ENCODE measurements at regions of chr7 and their contacts with region 1.

Region 1: DNA sequence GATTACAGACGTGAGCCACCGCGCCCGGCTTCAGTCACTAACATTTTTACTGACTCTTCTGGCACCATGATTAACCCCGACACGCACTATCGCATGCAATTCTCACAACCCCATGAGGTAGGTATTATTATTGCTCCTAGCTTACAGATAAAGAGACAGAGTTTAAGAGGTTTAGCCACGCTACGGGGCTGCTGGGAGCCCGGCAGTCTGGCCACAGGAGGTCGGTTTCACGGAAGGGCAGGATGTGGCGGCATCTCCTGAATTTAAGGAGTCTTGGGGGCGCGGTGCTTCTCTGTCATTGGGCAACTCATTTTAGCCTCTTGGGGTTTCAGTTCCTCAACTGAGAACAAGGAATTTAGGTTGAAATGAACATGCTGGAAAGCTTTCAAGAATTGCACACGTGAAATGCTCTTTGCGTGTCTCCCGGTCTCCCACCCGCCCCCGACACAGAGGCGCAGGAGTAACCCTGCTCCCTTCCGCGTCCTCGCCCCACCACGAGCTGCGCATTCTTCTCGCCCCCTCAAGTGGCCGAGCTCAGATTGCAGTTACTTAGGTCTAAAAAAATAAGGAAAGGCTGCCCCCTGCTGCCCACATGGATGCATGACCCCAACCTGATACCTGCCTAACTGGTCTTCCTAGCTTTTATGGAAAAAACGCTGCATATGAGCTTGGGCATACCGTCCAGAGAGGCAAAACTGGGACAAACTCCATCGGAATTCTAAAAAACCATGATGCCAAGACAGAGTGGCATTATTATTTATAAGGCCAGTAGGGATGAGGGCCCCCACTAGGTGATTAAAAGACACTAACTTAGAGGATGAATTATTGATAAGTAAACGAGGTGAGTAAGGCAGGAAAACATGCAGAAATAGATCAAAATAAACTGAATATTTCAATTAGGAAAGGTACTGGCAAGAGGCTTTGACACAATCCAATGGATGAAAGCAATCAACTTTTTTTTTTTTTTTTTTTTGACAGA is 12.4 kb downstream of the PRSS2 start:
- DNase-seq: peak; percentile 89

Region 2: GRCh38 chr7:142632291-142633134 is 150.7 kb before region 1 on chr7:
- CTCF ChIA-PET with region 1: interaction called, 45 read pairs
- POLR2A ChIA-PET with region 1: no interaction called
- DNase-seq: peak; percentile 86

Region 3: DNA sequence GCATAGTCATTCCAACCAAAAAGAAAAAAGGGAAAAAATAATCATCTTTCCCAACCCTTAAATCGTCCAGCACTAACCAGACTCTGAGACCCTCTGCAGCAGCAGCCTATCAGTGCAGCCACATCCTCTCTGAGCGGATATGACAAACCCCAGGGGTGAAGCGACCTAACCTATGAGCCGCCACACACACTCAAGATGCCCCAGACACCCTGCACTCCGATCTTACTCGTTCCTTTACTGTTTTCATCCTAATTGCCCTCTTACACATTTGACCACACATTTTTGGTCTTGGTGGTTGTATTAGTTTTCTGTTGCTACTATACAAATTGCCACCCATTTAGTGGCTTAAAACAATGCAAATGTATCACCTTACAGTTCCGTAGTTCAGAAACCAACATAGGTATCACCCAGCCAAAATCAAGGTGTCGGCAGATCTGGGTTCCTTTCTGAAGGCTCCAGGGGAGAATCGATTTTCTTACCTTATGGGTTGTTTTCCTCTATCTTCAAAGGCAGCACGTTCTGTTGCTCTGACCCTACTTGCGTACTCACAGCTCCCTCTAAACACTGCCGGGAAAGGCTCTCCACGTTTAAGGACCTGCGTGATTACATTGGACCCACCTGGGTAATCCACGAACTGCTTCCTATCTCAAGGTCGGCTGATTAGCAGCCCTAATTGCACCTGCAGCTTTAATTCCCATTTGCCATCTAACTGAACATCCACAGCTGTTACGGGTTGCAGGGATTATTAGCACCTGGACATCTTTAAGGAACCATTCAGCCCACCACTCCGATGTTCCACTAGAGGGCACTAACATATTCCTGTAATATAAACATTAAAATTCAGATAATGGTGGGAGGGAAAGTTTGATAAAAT is 71.2 kb before region 1 on chr7:
- CTCF ChIA-PET with region 1: interaction called, 17 read pairs
- POLR2A ChIA-PET with region 1: no interaction called
- DNase-seq: peak; percentile 53

Region 4: DNA sequence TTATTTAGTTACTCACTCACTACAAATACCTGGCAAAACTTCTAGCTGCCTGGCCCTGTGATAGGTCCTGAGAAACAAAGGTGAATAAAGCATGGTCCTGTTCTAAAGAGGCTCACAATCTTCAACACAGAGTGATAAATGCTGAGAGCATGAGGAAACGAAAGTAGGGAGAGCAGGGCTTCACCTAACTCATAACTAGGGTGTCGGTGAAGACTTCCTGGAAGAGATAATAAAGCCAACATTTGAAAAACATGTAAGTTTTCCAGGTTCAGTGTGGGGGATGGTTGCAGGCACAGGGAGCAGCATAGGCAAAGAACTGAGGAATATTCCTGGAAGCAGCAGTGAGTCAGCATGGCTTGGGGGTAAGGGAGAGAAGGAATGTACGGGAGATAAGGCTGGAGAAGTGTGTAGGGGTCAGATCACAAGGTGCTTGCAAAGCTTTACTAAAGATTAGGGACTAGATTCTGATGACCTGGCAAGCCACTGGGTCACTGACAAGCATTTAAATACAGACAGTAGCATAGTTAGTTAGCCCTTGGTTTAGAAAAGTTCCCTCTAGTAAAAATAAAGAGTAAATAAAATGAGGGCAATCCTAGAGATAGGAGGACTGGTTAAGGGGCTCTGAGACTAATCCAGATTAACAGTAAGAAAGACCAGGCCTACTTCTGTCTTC is 173.9 kb after region 1 on chr7:
- CTCF ChIA-PET with region 1: no interaction called
- POLR2A ChIA-PET with region 1: no interaction called
- DNase-seq: no peak

Measured in HEK293T (cell line).